ENCODE measurements at regions of chr3 and their contacts with region 1.

Region 1: GRCh38 chr3:182683453-182683852 is 109.9 kb upstream of the ATP11B start:
- DNase-seq: peak; percentile 62
- H3K4me3 Mint-ChIP-seq: peak overlapping the region; percentile 28
- H3K27ac Mint-ChIP-seq: no peak overlapping the region
- H3K4me1 Mint-ChIP-seq: peaks cover 6% of the 10 kb centered on the region
- H3K27me3 Mint-ChIP-seq: peaks cover 43% of the 10 kb centered on the region

Region 2: DNA sequence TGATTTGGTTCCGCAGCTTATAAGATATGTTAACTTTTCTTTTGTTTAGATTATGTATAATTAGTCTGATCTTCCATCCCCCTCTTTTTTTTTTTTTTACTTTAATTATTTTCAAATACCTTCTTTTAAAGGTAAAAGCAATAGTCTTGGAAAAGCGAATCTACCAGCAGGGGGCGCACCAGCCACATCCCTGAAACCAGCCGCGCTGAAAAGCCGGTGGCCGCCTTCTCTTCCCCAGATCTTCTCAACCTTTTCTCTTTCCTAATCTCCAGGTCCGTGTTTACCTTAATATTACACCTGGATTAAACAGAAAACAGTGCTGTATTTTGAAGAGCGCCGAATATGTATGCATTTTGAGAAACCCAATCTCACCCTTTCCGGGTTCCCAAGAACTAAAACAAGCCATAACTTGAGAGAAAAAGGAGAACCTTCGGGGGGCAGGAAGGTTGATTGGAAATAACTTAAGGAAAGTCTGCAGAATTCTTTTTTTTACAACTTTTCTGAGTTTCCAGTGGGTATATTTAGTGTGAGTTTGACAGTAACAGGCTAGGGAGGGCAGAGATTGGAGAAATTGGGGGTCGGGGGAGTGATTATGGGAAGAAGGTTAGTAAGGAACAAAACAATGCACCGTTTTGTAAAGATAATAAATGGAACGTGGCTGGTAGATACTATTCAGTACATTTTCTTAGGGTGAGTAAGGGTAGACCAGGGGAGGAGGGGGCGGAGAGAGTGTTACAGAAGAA is 973.7 kb before region 1 on chr3:
- CTCF ChIA-PET with region 1: interaction called, 26 read pairs
- POLR2A ChIA-PET with region 1: no interaction called
- DNase-seq: peak; percentile 63
- H3K4me3 Mint-ChIP-seq: no peak overlapping the region
- H3K27ac Mint-ChIP-seq: peak overlapping the region; percentile 13
- H3K4me1 Mint-ChIP-seq: peaks cover 8% of the 10 kb centered on the region
- H3K27me3 Mint-ChIP-seq: peaks cover 64% of the 10 kb centered on the region

Region 3: DNA sequence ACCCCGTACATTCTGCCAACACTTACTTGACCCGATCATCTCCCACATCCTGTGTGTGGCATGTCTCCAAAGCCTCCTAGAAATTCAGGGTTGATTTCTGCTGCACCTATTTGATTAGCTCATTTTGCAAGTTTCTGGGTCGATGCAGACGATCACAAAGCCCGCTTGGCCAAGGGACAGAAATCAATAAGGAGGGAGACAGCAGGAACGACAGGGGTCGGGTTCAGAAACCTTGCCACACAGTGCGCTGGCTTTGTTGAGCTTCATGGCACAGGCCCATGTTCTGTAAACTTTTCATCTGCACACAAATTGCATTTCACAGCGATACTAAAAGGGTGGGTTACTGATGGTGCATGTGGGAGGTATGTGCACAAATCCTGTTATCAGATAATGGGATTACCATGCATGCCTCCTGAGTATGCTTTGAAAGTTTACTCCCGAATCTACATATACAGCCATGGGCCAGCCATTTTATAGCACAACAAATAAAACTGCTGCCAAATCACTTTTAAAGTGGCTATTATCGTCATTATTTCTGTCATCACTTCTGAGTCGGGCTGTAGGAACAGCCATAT is 14.0 kb after region 1 on chr3:
- CTCF ChIA-PET with region 1: interaction called, 14 read pairs
- POLR2A ChIA-PET with region 1: no interaction called
- DNase-seq: no peak
- H3K4me3 Mint-ChIP-seq: no peak overlapping the region
- H3K27ac Mint-ChIP-seq: no peak overlapping the region
- H3K4me1 Mint-ChIP-seq: no peaks in the 10 kb centered on the region
- H3K27me3 Mint-ChIP-seq: peaks cover 14% of the 10 kb centered on the region

Region 4: DNA sequence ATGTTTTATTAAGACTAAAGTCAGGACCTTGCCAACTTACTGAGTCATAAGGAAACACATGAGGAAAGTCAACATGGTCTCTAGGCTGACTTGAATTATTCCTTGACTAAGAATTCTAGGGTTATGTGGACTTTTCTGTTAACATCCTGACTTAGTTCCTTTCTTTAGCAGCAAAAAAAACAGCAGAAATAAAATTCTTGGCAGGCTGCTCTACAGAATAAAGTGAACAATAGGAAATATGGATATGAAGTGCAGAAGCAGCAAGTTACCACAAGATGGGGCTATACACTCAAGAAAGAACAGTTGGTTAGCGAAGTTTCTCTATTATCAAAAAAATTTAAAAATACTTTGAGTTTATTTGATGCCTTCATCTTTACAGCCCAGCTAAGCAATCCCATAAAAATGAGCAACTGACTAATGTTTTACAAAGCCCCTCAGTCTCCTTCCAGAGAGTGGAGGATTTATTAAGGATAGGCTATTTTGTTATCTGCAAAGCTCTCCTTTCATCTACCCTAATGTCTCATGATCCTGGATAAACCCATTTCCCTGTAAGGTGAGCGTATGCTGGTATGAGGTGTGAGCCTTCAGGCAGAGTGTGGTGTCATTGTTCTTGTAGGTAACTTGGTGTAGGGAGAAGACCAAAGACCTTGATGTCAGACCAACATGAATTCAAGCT is 438.9 kb after region 1 on chr3:
- CTCF ChIA-PET with region 1: no interaction called
- POLR2A ChIA-PET with region 1: no interaction called
- DNase-seq: no peak
- H3K4me3 Mint-ChIP-seq: no peak overlapping the region
- H3K27ac Mint-ChIP-seq: no peak overlapping the region
- H3K4me1 Mint-ChIP-seq: peaks cover 2% of the 10 kb centered on the region
- H3K27me3 Mint-ChIP-seq: peaks cover 3% of the 10 kb centered on the region